Naive thymus-derived CD4-positive, alpha-beta T cell (primary cell): ENCODE measurements at regions of chr14 and their contacts with region 1.

Region 1: DNA sequence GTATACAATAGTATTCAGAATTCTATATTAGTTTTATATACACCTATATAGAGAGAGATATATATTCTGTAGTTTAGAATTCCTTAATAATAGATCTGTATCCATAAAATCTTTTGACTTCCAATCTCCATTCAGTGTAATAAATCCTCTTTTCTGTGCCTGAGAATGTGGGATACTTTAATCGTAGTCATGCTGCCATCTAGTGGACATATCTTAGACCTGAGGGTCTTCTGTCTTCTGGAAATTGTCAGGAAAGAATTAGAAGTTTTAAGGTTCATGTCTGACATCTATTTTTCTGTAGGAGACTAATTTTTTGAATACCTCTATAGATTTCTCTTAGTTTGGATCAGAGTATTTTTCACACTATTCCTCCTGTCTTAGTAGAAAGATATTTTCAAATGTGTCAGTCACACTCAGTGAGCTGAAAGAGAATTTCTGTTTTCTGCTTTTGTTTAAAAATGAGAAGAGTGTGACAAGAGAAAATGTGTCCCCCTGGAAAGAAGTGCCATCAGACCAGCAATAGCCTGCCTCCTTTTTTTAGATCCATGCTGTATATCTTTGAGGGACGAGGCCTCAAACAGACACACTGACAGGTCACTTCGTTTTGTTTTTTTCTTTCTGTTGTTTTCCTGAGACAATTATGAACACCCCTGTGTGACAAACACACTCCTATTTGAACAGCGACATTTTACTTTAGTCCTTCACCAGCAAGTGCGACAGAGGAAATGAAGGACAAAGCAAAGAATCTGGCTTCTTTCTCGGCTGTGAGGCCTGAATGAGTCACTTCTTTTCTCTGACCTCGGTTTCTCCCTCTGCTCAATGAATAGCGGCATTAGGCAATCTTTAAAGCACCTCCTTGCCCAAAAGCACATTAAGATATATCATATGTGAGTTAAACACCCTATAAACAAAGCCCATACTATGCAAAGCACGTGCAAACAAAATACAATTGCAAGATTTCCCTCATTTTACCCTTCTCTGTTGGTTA is 96.3 kb downstream of the GALC start:
- DNase-seq: peak in 5 of 9 donors; percentile 1 to 22 (median 4)
- ATAC-seq: no peak
- H3K4me3 ChIP-seq: no peak overlapping the region
- H3K4me3 Mint-ChIP-seq: no peak overlapping the region
- H3K27ac ChIP-seq: no peak overlapping the region
- H3K27ac Mint-ChIP-seq: no peak overlapping the region
- H3K4me1 ChIP-seq: no peaks in the 10 kb centered on the region
- H3K4me1 Mint-ChIP-seq: no peaks in the 10 kb centered on the region
- H3K27me3 ChIP-seq: peaks cover 0 to 3% of the 10 kb centered on the region in 2 donors
- H3K27me3 Mint-ChIP-seq: peaks cover 10 to 30% (median 25%) of the 10 kb centered on the region in 5 donors

Region 2: GRCh38 chr14:87745507-87746118 is 151.1 kb before region 1 on chr14:
- CTCF ChIA-PET with region 1: no interaction called
- POLR2A ChIA-PET with region 1: no interaction called
- intact Hi-C with region 1: loop called in 1 of 2 experiments (anchors 1 kb)
- DNase-seq: no peak
- ATAC-seq: no peak
- H3K4me3 ChIP-seq: no peak overlapping the region
- H3K4me3 Mint-ChIP-seq: no peak overlapping the region
- H3K27ac ChIP-seq: no peak overlapping the region
- H3K27ac Mint-ChIP-seq: no peak overlapping the region
- H3K4me1 ChIP-seq: no peaks in the 10 kb centered on the region
- H3K4me1 Mint-ChIP-seq: peaks cover 0 to 1% (median 0%) of the 10 kb centered on the region in 7 donors
- H3K27me3 ChIP-seq: no peaks in the 10 kb centered on the region
- H3K27me3 Mint-ChIP-seq: peaks cover 0 to 9% (median 6%) of the 10 kb centered on the region in 5 donors

Region 3: DNA sequence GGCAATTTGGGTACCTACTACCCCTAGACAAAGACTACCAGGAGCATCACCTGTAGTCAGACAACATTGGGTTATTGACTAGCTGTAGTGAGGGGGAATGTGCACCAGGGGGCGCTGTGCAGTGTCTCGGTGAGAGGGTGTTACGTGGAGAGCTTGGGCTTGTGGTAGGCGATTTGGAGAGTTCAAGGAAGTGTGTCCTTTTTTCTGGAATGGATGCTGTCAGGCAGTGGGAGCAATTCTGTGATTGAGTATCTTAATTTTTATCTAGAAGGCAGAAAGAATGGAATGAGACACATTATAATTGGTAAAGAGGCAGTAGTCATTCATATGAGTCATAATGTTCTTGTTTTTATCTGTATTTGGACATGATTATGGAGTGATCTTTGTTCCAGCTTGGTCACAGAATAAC is 91.4 kb before region 1 on chr14:
- CTCF ChIA-PET with region 1: interaction called, 4 read pairs
- POLR2A ChIA-PET with region 1: no interaction called
- intact Hi-C with region 1: loop called in 1 of 2 experiments (anchors 1 kb)
- DNase-seq: peak in 5 of 9 donors; percentile 1 to 56 (median 8)
- ATAC-seq: no peak
- H3K4me3 ChIP-seq: no peak overlapping the region
- H3K4me3 Mint-ChIP-seq: no peak overlapping the region
- H3K27ac ChIP-seq: no peak overlapping the region
- H3K27ac Mint-ChIP-seq: no peak overlapping the region
- H3K4me1 ChIP-seq: no peaks in the 10 kb centered on the region
- H3K4me1 Mint-ChIP-seq: no peaks in the 10 kb centered on the region
- H3K27me3 ChIP-seq: no peaks in the 10 kb centered on the region
- H3K27me3 Mint-ChIP-seq: peaks cover 2 to 22% (median 17%) of the 10 kb centered on the region in 5 donors

Region 4: GRCh38 chr14:87838931-87839330 is 57.8 kb before region 1 on chr14:
- CTCF ChIA-PET with region 1: no interaction called
- POLR2A ChIA-PET with region 1: no interaction called
- intact Hi-C with region 1: no loop called
- DNase-seq: no peak
- ATAC-seq: no peak
- H3K4me3 ChIP-seq: no peak overlapping the region
- H3K4me3 Mint-ChIP-seq: no peak overlapping the region
- H3K27ac ChIP-seq: no peak overlapping the region
- H3K27ac Mint-ChIP-seq: no peak overlapping the region
- H3K4me1 ChIP-seq: no peaks in the 10 kb centered on the region
- H3K4me1 Mint-ChIP-seq: no peaks in the 10 kb centered on the region
- H3K27me3 ChIP-seq: no peaks in the 10 kb centered on the region
- H3K27me3 Mint-ChIP-seq: peaks cover under 1 to 17% (median 6%) of the 10 kb centered on the region in 5 donors

Region 5: DNA sequence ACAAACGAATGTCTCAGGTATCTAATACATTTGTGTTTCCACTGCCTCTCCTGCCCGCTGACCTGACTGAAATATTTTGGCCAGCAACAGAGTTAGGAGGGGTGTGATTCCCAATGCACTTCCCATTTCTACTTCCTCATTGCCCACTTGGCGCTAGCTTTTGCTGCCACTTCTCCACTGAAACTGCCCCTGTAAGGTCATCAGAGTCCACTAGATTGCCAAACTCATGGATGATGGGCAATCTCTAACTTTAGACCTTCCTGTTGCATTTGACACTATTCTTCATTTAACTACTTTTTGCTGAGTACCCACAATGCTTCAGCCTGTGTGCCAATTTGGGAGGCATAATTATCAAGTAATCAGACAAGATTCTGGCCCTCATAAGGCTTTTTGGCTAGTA is 149.0 kb after region 1 on chr14:
- CTCF ChIA-PET with region 1: no interaction called
- POLR2A ChIA-PET with region 1: no interaction called
- intact Hi-C with region 1: no loop called
- DNase-seq: no peak
- ATAC-seq: peak; percentile 66
- H3K4me3 ChIP-seq: no peak overlapping the region
- H3K4me3 Mint-ChIP-seq: no peak overlapping the region
- H3K27ac ChIP-seq: no peak overlapping the region
- H3K27ac Mint-ChIP-seq: no peak overlapping the region
- H3K4me1 ChIP-seq: peaks cover 0 to 5% of the 10 kb centered on the region in 2 donors
- H3K4me1 Mint-ChIP-seq: peaks cover 0 to 9% (median 8%) of the 10 kb centered on the region in 7 donors
- H3K27me3 ChIP-seq: no peaks in the 10 kb centered on the region
- H3K27me3 Mint-ChIP-seq: peaks cover 0 to 5% (median 0%) of the 10 kb centered on the region in 5 donors

Region 6: DNA sequence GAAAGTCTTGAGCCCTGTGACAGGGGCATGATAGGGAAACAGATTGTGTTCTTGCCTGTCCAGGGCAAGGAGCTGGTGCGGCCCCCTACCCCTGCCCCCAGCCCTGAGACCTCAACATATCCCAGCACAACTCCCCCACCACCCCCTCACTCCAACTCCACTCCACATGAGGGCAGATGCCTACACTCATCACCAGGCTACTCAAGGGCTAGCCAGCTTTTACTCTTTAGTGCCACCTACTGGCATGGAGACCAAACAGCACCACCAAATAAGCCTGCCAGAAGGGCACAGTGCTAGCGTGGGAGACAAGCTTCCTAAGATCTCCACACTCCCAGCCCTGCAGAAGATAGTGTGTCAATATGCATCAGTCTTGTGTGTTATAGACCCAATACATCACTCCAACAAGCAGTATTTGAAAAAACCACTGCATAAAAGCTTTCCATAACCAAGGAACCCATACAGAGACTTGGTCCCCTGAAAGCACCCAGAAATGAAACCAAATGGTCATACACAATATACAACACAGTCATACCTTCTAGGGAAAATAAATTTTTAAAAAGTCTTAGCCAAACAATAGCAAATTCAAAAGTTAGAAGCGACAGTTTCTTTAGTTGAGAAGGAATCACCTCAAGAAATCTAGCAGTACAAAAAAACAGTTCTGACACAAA is 271.9 kb after region 1 on chr14:
- CTCF ChIA-PET with region 1: no interaction called
- POLR2A ChIA-PET with region 1: no interaction called
- intact Hi-C with region 1: loop called in 1 of 2 experiments (anchors 5 kb)
- DNase-seq: peak; percentile 18 to 69 (median 47)
- ATAC-seq: peak; percentile 94
- H3K4me3 ChIP-seq: no peak overlapping the region
- H3K4me3 Mint-ChIP-seq: peak overlapping the region in 1 of 10 donors; percentile 5
- H3K27ac ChIP-seq: no peak overlapping the region
- H3K27ac Mint-ChIP-seq: peak overlapping the region in 1 of 9 donors; percentile 21
- H3K4me1 ChIP-seq: no peaks in the 10 kb centered on the region
- H3K4me1 Mint-ChIP-seq: peaks cover 0 to 14% (median 0%) of the 10 kb centered on the region in 7 donors
- H3K27me3 ChIP-seq: no peaks in the 10 kb centered on the region
- H3K27me3 Mint-ChIP-seq: peaks cover 9 to 41% (median 19%) of the 10 kb centered on the region in 5 donors